ENCODE measurements at regions of chr14 and their contacts with region 1.

Region 1: DNA sequence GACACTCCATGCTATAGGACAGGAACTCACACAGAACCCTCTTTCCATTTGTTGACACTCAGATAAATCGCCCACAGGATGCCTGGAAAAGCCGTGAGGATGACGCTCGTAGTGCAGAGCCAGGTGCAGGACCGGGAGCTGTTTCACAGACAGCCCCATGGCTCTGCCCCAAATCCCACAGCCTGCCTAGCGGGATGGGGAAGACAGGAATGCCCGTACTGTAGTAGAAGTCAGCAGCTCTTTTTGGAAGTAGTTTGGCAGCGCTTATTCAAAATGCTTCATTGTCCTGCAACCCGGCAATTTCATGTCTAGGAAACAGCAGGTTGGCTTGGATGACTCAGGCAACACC is 41.6 kb downstream of the JAG2 start:
- DNase-seq: no peak
- ATAC-seq: no peak
- H3K4me3 Mint-ChIP-seq: no peak overlapping the region
- H3K27ac Mint-ChIP-seq: no peak overlapping the region
- H3K4me1 Mint-ChIP-seq: 0 out of 2 replicates have a peak, but pooled peaks cover 3% of the 10 kb centered on the region
- H3K27me3 Mint-ChIP-seq: peaks cover 14% of the 10 kb centered on the region
- CTCF ChIP-seq: no peak

Region 2: GRCh38 chr14:103319422-103319821 is 1807.5 kb before region 1 on chr14:
- CTCF ChIA-PET with region 1: interaction called, 10 read pairs
- POLR2A ChIA-PET with region 1: no interaction called
- DNase-seq: no peak
- ATAC-seq: no peak
- H3K4me3 Mint-ChIP-seq: no peak overlapping the region
- H3K27ac Mint-ChIP-seq: no peak overlapping the region
- H3K4me1 Mint-ChIP-seq: peaks cover 33% of the 10 kb centered on the region
- H3K27me3 Mint-ChIP-seq: no peaks in the 10 kb centered on the region
- CTCF ChIP-seq: no peak

Region 3: DNA sequence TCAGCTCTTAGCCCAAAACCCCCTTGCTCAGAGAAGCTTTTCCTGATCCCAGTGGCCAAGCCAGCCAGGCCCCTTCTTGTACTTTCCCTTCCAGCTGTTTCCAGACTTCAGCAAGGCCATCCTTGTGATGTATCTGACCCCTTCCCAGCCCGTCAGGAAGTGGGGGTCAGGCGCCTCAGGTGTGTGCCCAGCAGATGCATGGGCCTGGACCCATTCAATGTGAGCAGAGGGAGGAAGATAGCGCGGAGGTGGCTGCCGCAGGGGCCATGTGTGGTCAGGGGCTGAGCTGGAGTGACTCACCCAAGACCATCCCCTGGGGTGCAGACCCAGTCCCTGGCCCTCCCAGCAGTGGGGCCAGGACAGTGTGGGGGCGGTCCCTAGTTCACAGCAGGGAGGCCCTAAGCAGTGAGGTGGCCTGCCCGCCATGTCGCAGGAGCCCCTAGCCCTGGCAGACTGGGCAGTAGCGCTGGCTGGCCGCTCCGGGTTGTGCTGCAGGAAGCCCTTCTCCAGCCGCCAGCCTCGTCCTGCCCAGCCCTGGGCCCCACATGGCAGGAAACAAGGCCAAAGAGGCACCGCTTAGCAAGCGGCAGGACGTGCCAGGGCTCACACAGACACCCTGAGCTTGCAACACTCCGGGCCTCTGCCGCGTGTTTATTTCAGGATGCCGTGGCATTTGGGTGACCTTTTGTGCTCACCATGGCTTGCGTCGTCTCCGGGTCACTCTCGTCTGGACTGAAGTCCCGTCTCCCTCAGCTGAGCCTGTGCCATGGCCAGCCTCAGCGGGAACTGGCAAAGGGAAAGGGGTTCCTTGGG is 390.9 kb before region 1 on chr14:
- CTCF ChIA-PET with region 1: no interaction called
- POLR2A ChIA-PET with region 1: no interaction called
- DNase-seq: no peak
- ATAC-seq: no peak
- H3K4me3 Mint-ChIP-seq: no peak overlapping the region
- H3K27ac Mint-ChIP-seq: peak overlapping the region; percentile 67
- H3K4me1 Mint-ChIP-seq: no peaks in the 10 kb centered on the region
- H3K27me3 Mint-ChIP-seq: no peaks in the 10 kb centered on the region
- CTCF ChIP-seq: no peak

Region 4: GRCh38 chr14:105144666-105145380 is 17.9 kb after region 1 on chr14:
- CTCF ChIA-PET with region 1: no interaction called
- POLR2A ChIA-PET with region 1: no interaction called
- DNase-seq: peak; percentile 13
- ATAC-seq: peak; percentile 50
- H3K4me3 Mint-ChIP-seq: no peak overlapping the region
- H3K27ac Mint-ChIP-seq: no peak overlapping the region
- H3K4me1 Mint-ChIP-seq: no peaks in the 10 kb centered on the region
- H3K27me3 Mint-ChIP-seq: no peaks in the 10 kb centered on the region
- CTCF ChIP-seq: no peak

Region 5: GRCh38 chr14:105212541-105213300 is 85.8 kb after region 1 on chr14:
- CTCF ChIA-PET with region 1: no interaction called
- POLR2A ChIA-PET with region 1: no interaction called
- DNase-seq: no peak
- ATAC-seq: no peak
- H3K4me3 Mint-ChIP-seq: no peak overlapping the region
- H3K27ac Mint-ChIP-seq: peak overlapping the region; percentile 19; the same call in 1 of the 2 replicates
- H3K4me1 Mint-ChIP-seq: no peaks in the 10 kb centered on the region
- H3K27me3 Mint-ChIP-seq: no peaks in the 10 kb centered on the region
- CTCF ChIP-seq: no peak